CD4-positive, alpha-beta memory T cell (primary cell): ENCODE measurements at regions of chr11 and their contacts with region 1.

Region 1: GRCh38 chr11:107916671-107917241 is 11.5 kb upstream of the RAB39A start:
- DNase-seq: peak in 4 of 5 donors; percentile 12 to 38 (median 24)
- H3K4me3 ChIP-seq: no peak overlapping the region
- H3K4me3 Mint-ChIP-seq: no peak overlapping the region
- H3K27ac ChIP-seq: no peak overlapping the region
- H3K27ac Mint-ChIP-seq: no peak overlapping the region
- H3K4me1 ChIP-seq: no peaks in the 10 kb centered on the region
- H3K4me1 Mint-ChIP-seq: peaks cover 0 to 6% (median under 1%) of the 10 kb centered on the region in 4 donors
- H3K27me3 ChIP-seq: no peaks in the 10 kb centered on the region
- H3K27me3 Mint-ChIP-seq: peaks cover 5 to 12% of the 10 kb centered on the region in 2 donors

Region 2: GRCh38 chr11:107824668-107825369 is 91.9 kb before region 1 on chr11:
- CTCF ChIA-PET with region 1: no interaction called
- POLR2A ChIA-PET with region 1: no interaction called
- intact Hi-C with region 1: no loop called
- DNase-seq: no peak
- H3K4me3 ChIP-seq: no peak overlapping the region
- H3K4me3 Mint-ChIP-seq: no peak overlapping the region
- H3K27ac ChIP-seq: no peak overlapping the region
- H3K27ac Mint-ChIP-seq: no peak overlapping the region
- H3K4me1 ChIP-seq: no peaks in the 10 kb centered on the region
- H3K4me1 Mint-ChIP-seq: peaks cover 0 to 5% (median 1%) of the 10 kb centered on the region in 4 donors
- H3K27me3 ChIP-seq: no peaks in the 10 kb centered on the region
- H3K27me3 Mint-ChIP-seq: no peaks in the 10 kb centered on the region

Region 3: GRCh38 chr11:107928046-107928766 is 11.4 kb after region 1 on chr11 and contains the start of gene RAB39A:
- CTCF ChIA-PET with region 1: interaction called, 12 read pairs
- POLR2A ChIA-PET with region 1: no interaction called
- intact Hi-C with region 1: no loop called
- DNase-seq: peak; percentile 48 to 79 (median 65)
- H3K4me3 ChIP-seq: peak within 1 kb of the TSS in 1 of 2 donors; percentile 50
- H3K4me3 Mint-ChIP-seq: peak within 1 kb of the TSS; percentile 70 to 86 (median 76)
- H3K27ac ChIP-seq: no peak within 1 kb of the TSS
- H3K27ac Mint-ChIP-seq: peak within 1 kb of the TSS in 1 of 7 donors; percentile 53
- H3K4me1 ChIP-seq: peaks cover 13% of the 10 kb centered on the region
- H3K4me1 Mint-ChIP-seq: peaks cover 6 to 13% (median 10%) of the 10 kb centered on the region in 4 donors
- H3K27me3 ChIP-seq: peaks cover 13% of the 10 kb centered on the region
- H3K27me3 Mint-ChIP-seq: peaks cover 29 to 40% of the 10 kb centered on the region in 2 donors
- total RNA-seq, gene RAB39A: 0.17 TPM in 1 of 2 experiments, not detected in the other

Region 4: GRCh38 chr11:107988397-107989158 is 71.8 kb after region 1 on chr11:
- CTCF ChIA-PET with region 1: no interaction called
- POLR2A ChIA-PET with region 1: no interaction called
- intact Hi-C with region 1: no loop called
- DNase-seq: no peak
- H3K4me3 ChIP-seq: no peak overlapping the region
- H3K4me3 Mint-ChIP-seq: no peak overlapping the region
- H3K27ac ChIP-seq: no peak overlapping the region
- H3K27ac Mint-ChIP-seq: no peak overlapping the region
- H3K4me1 ChIP-seq: no peaks in the 10 kb centered on the region
- H3K4me1 Mint-ChIP-seq: no peaks in the 10 kb centered on the region
- H3K27me3 ChIP-seq: no peaks in the 10 kb centered on the region
- H3K27me3 Mint-ChIP-seq: peaks cover 5 to 8% of the 10 kb centered on the region in 2 donors

Region 5: GRCh38 chr11:108025387-108026080 is 108.8 kb after region 1 on chr11:
- CTCF ChIA-PET with region 1: no interaction called
- POLR2A ChIA-PET with region 1: no interaction called
- intact Hi-C with region 1: no loop called
- DNase-seq: peak in 1 of 5 donors; percentile 3
- H3K4me3 ChIP-seq: no peak overlapping the region
- H3K4me3 Mint-ChIP-seq: peak overlapping the region in 2 of 8 donors; percentile 21 to 28
- H3K27ac ChIP-seq: no peak overlapping the region
- H3K27ac Mint-ChIP-seq: peak overlapping the region in 6 of 7 donors; percentile 2 to 71 (median 34)
- H3K4me1 ChIP-seq: peaks cover 39% of the 10 kb centered on the region
- H3K4me1 Mint-ChIP-seq: peaks cover 43 to 74% (median 62%) of the 10 kb centered on the region in 4 donors
- H3K27me3 ChIP-seq: no peaks in the 10 kb centered on the region
- H3K27me3 Mint-ChIP-seq: no peaks in the 10 kb centered on the region

Region 6: DNA sequence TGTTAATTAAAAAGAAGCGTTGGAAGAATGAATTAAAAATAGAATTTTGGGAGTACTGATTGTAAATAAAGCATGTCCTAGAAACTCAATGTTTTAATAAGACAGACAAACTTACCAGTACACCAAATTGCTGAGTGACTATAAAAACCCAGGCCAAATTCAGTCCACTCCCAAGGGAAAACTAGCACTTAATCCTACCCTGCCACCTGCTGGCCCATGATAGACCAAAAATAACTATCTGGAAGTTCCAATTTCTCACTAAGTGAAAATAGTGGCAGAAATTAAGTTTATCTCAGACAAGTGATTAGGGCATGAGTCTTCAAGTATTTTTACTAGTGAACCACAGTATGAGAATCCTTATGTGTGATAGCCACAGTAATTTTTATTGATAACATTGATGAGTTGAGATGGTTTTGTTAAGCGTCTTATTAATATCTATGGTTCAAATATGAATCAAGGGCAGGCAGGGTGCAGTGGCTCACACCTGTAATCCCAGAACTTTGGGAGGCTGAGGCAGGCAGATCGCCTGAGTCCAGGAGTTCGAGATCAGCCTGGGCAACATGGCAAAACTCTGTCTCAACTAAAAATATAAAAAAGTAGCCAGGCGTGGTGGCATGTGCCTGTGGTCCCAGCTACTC is 738.4 kb after region 1 on chr11:
- CTCF ChIA-PET with region 1: interaction called, 5 read pairs
- POLR2A ChIA-PET with region 1: no interaction called
- intact Hi-C with region 1: loop called (anchors 1 kb)
- DNase-seq: peak in 4 of 5 donors; percentile 6 to 22 (median 14)
- H3K4me3 ChIP-seq: no peak overlapping the region
- H3K4me3 Mint-ChIP-seq: no peak overlapping the region
- H3K27ac ChIP-seq: no peak overlapping the region
- H3K27ac Mint-ChIP-seq: no peak overlapping the region
- H3K4me1 ChIP-seq: no peaks in the 10 kb centered on the region
- H3K4me1 Mint-ChIP-seq: no peaks in the 10 kb centered on the region
- H3K27me3 ChIP-seq: no peaks in the 10 kb centered on the region
- H3K27me3 Mint-ChIP-seq: peaks cover 0 to 3% of the 10 kb centered on the region in 2 donors